ENCODE measurements at regions of chr6 and their contacts with region 1.

Region 1: DNA sequence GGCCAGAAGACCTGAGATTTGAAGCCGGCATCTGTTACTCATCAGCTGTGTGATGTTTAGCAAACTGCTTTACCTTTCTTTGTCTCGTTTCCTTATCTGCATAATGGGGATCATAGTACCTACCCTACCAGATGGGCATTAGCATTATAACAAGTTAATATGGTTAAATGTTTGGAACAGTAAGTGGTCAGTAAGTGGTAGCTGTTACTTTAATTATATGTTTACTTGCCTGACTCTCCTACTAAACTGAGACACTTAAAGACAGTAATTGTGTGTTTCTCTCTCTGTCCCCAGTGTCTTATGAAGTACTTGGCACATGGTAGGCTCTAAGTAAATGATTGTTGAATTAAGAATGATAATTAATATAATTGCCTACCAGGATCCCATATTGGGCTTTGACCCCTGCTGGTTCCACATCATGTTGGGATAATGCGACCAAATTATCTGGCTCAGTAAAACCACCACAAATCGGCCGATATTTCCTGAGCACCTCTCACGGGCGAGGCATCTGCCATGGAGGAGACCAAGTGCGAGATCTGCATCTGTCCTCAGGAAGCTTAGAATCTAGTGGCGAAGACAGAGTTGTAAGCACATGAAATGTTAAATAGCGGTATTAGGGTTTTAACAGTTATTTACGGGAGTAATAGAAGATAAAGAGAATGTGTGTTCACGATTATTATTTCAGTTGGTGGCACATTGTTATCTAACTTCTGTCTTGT is 31.4 kb downstream of the PTK7 start:
- DNase-seq: no peak
- H3K4me3 ChIP-seq: no peak overlapping the region
- H3K27ac ChIP-seq: no peak overlapping the region
- H3K4me1 ChIP-seq: peaks cover 14% of the 10 kb centered on the region
- H3K27me3 ChIP-seq: no peaks in the 10 kb centered on the region
- CTCF ChIP-seq: no peak

Region 2: GRCh38 chr6:42813906-42814444 is 293.5 kb before region 1 on chr6:
- CTCF ChIA-PET with region 1: no interaction called
- POLR2A ChIA-PET with region 1: no interaction called
- intact Hi-C with region 1: no loop called
- DNase-seq: no peak
- H3K4me3 ChIP-seq: no peak overlapping the region
- H3K27ac ChIP-seq: no peak overlapping the region
- H3K4me1 ChIP-seq: no peaks in the 10 kb centered on the region
- H3K27me3 ChIP-seq: no peaks in the 10 kb centered on the region
- CTCF ChIP-seq: no peak

Region 3: DNA sequence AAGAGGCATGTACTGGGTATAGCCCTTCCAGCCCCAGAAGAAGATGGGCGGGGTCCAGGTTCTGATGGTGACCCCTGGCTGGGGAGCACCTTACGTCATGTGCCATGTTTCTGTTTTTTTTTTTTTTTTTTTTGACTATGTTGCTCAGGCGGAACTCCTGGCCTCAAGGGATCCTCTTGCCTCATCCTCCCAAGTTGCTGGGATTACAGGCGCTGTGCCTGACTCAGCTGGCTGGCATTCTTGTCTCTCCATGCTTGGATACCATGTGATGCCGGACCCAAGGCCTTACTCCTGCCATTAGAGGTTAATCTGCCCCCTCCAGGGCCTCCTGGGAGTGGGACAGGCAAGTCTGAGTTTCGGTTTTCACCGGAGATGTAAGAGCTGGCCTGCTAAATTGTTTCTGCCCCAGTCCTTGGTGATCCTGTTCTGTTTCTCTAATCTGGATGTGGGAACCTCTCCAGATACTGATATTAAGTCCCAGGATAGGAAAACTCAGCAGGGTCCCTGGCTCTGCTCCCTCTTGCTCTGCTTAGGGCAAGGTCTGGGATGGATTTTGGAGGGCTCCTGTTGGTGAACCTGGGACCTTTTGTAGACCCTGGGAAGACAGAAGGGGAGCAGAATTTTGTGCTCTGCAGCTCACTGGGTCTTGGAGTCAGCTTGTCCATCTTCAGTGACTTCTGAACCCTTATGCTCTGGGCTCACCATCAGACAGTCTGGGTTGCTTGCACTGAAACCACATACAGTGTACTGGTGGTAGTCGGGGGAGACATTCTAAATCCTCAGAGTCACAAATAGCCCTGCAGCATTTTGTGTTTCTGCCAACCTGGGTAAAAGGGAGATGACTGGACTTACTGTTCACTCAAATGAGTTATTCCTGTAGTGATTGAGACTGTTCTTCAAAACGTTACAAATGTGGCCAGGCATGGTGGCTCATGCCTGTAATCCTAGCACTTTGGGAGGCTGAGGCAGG is 13.7 kb after region 1 on chr6:
- CTCF ChIA-PET with region 1: no interaction called
- POLR2A ChIA-PET with region 1: interaction called, 19 read pairs
- intact Hi-C with region 1: no loop called
- DNase-seq: peak; percentile 70 to 94
- H3K4me3 ChIP-seq: no peak overlapping the region
- H3K27ac ChIP-seq: peak overlapping the region; percentile 91
- H3K4me1 ChIP-seq: peaks cover 32% of the 10 kb centered on the region
- H3K27me3 ChIP-seq: no peaks in the 10 kb centered on the region
- CTCF ChIP-seq: no peak

Measured in PC-9 (cell line).